ENCODE measurements at regions of chr5 and their contacts with region 1.

Region 1: DNA sequence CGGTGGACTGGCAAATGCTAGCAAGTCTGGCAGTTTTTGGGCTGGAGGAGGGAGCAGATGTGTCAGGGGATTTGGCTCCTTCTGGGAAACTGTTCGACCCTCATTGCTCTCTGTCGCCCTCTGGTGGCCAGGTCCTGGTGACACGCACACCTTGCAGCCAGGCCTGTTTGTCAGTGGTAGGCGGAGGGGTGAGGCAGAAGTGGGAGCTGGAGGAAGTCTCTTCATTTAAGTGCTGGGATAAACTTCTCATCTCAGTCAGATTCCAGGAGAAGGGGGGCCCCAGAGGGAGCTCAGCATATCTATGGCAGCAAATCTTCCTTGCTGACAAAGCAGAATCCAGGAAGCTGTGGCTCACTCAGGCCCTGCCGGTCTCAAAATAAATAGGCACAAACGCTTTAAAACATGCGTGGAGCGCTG is 326.5 kb downstream of the ZSWIM6 start:
- DNase-seq: peak; percentile 92
- H3K4me3 Mint-ChIP-seq: no peak overlapping the region
- H3K27ac Mint-ChIP-seq: no peak overlapping the region
- H3K4me1 Mint-ChIP-seq: no peaks in the 10 kb centered on the region
- H3K27me3 Mint-ChIP-seq: peaks cover 51% of the 10 kb centered on the region
- CTCF ChIP-seq: peak; percentile 96

Region 2: GRCh38 chr5:61162010-61162831 is 496.4 kb before region 1 on chr5 and contains the start of gene SMIM15:
- CTCF ChIA-PET with region 1: no interaction called
- intact Hi-C with region 1: loop called (anchors 5 kb)
- DNase-seq: peak; percentile 91
- H3K4me3 Mint-ChIP-seq: peak within 1 kb of the TSS; percentile 90
- H3K27ac Mint-ChIP-seq: peak within 1 kb of the TSS; percentile 95
- H3K4me1 Mint-ChIP-seq: peaks cover 22% of the 10 kb centered on the region
- H3K27me3 Mint-ChIP-seq: no peaks in the 10 kb centered on the region
- CTCF ChIP-seq: no peak
- total RNA-seq, gene SMIM15: 89.6 and 100 TPM in 2 replicates

Region 3: GRCh38 chr5:61362796-61363368 is 295.7 kb before region 1 on chr5:
- CTCF ChIA-PET with region 1: no interaction called
- intact Hi-C with region 1: loop called (anchors 5 kb)
- DNase-seq: peak; percentile 6
- H3K4me3 Mint-ChIP-seq: no peak overlapping the region
- H3K27ac Mint-ChIP-seq: no peak overlapping the region
- H3K4me1 Mint-ChIP-seq: peaks cover 29% of the 10 kb centered on the region
- H3K27me3 Mint-ChIP-seq: no peaks in the 10 kb centered on the region
- CTCF ChIP-seq: no peak

Region 4: GRCh38 chr5:61613679-61614078 is 44.9 kb before region 1 on chr5:
- CTCF ChIA-PET with region 1: interaction called, 11 read pairs
- intact Hi-C with region 1: no loop called
- DNase-seq: no peak
- H3K4me3 Mint-ChIP-seq: no peak overlapping the region
- H3K27ac Mint-ChIP-seq: no peak overlapping the region
- H3K4me1 Mint-ChIP-seq: no peaks in the 10 kb centered on the region
- H3K27me3 Mint-ChIP-seq: peaks cover 54% of the 10 kb centered on the region
- CTCF ChIP-seq: no peak

Region 5: DNA sequence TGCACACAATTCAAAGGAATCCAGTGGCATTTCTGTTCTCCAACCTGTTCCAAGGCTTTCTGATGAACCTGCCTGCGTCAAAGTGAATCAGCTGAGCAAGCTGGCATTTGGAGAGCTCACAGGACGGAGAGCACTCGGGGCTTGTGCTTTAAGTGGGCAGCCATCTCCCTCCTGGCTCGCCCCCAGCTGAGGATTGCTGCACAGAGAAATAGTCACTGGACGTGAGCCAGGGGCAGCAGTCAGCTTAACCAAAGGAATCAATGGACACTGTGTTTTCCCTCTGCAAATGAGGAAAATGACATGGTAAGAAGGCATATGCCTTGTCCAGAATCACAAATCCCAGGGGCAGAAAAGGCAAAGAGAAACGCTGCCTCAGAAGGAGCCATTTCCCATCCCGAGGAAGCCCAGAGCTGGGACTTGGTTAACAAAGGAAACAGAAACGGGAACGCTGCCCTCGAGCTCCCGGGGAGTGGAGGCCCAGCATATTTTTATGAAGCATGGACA is 27.1 kb before region 1 on chr5:
- CTCF ChIA-PET with region 1: no interaction called
- intact Hi-C with region 1: no loop called
- DNase-seq: no peak
- H3K4me3 Mint-ChIP-seq: no peak overlapping the region
- H3K27ac Mint-ChIP-seq: no peak overlapping the region
- H3K4me1 Mint-ChIP-seq: no peaks in the 10 kb centered on the region
- H3K27me3 Mint-ChIP-seq: peaks cover 24% of the 10 kb centered on the region
- CTCF ChIP-seq: no peak